ENCODE measurements at regions of chr5 and their contacts with region 1.

Region 1: DNA sequence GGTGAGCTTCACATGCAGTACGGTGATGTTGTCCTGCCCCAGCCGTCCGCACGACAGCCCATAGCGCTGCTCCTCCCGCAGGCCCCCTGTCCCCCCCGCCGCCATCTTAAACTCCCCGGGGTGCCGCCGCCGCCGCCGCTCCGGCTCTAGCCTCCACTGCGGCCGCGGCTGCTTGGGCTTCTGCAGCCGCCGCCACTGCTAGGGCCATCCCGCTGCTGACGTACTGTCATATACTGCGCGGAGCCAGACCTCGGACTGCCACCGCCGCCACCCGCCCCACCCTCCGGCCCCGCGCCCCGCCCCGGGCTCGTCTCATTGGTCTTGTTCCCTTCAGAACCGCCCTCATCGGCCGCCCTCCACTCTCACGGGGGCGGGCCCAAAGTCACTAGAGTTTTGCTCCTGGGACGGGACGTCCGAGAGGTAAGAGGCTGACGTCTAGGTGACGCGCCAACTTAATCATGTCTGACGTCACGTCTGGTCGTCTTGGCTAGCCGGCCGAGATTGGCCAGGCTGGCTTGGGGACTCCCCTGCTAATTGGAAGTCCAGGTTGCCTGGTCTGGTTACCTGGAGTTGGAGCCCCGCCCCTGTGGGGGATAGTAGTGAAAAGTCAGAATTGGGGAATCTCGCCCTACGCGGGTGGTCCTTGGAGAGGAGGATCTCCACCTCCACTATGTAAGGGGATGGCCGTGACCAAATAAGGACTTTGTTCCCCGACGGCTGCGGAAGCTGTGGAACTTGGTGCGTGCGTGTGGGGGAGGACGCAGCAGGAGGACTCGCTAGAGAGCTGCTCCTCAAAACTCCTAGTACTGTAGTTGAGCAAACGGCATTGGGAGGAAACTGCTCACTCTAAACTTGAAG is at the start of gene ELL2:
- DNase-seq: peak; percentile 99
- ATAC-seq: peak; percentile 89
- total RNA-seq, gene ELL2: 30.8 TPM

Region 2: GRCh38 chr5:95858661-95859326 is 103.1 kb before region 1 on chr5:
- intact Hi-C with region 1: loop called (anchors 2 kb)
- DNase-seq: peak; percentile 92
- ATAC-seq: peak; percentile 77

Region 3: DNA sequence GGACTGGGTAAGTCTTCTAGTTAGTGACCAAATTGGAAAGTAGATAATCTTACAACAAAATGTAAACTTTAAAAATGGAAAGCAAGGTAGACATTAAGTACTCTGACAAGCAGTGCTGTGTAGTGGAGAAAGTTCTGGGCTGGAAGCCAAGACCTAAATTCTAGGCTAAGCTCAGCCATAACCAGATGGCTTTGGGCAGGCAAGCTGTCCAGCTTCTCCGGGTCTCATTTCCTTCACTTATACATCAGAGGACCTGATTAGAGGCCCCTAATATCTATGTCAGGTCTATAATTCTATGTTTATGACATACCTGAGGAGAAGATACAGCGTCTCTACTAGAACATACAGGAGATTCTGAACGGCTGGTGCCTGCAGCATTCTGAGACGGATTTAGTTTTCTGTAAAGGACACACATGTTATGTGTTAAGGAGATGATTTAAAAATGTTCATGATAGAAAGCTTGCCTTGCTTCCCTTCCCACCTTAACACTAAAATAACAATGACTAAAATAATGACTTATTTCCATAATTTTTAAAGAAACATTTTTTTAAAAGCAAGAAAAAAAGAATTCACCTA is 61.4 kb before region 1 on chr5:
- intact Hi-C with region 1: loop called (anchors 10 kb)
- DNase-seq: no peak
- ATAC-seq: peak; percentile 89

Region 4: DNA sequence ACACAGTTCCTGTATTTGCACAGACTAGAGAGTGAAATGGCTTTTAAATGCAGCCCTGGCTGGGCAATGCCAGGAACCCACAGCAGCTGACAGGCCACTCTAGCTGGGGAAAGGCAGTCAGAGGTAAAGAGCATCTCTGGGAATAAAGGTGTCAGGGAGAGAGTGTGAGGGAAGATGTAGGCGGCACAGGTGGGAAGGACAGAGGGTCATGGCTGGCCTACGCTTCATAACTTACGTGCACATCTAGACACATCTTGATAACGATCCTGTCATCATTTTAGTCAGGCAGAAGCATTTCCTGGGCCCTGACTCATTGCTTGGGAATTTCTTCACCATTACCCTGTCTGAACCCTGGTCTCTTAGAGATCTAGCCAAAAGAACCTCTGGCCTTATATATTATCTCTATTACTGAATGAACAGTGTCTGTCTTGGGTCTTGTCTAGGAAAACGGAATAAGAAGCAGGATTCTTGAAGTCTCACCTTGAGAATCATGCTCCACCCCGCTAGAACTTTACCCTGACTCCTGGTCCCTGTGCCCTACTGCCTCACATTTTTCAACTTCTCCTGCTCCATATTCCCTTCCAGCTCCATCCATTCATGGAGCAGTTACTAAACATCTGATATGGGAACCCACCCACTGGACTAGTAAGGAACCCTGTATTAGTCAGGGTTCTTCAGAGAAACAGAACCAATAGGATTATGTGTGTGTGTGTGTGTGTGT is 106.2 kb after region 1 on chr5:
- intact Hi-C with region 1: no loop called
- DNase-seq: no peak
- ATAC-seq: no peak

Region 5: DNA sequence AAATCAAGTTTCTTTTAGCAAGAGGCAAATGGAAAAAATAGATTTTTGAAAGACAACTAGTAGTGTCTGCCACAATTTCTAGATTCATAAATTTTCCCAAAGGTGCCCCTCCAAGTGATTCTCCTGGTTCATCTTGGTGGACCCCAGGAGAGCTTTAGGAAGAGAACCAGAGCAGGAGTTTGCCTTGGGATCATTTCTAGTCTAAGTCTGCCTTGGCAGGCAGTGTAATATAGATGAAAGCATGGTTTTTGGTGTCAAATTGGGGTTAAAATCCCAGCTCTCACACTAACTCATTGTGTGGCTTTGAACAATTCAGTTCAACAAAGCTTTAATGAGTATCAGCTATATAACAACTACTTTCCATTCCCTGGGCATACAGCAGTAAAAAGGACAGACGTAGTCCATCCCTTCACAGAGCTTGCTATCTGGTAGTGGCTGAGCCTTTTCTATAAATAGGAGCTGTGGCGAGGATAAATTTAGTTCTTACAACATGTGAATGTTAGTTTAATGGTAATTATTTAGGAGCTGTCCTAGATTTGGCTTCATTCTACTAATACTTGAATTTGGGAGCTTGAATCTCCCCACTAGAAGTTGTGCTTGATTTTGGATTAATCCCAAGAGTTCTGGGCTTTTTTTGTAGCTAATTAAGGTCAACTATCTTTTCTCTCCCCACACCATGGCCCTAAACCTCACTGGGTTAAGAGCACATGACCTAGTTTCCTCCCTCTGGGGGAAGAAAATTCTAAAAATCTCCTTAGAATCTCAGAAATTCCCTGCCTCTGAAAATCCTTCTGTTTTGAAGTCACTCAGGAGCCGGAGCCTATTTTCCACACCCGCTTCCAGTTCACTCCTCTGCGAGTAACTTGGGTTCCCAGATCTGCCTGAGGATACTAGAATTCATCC is 273.4 kb after region 1 on chr5:
- intact Hi-C with region 1: loop called (anchors 10 kb)
- DNase-seq: no peak
- ATAC-seq: peak; percentile 96

Region 6: DNA sequence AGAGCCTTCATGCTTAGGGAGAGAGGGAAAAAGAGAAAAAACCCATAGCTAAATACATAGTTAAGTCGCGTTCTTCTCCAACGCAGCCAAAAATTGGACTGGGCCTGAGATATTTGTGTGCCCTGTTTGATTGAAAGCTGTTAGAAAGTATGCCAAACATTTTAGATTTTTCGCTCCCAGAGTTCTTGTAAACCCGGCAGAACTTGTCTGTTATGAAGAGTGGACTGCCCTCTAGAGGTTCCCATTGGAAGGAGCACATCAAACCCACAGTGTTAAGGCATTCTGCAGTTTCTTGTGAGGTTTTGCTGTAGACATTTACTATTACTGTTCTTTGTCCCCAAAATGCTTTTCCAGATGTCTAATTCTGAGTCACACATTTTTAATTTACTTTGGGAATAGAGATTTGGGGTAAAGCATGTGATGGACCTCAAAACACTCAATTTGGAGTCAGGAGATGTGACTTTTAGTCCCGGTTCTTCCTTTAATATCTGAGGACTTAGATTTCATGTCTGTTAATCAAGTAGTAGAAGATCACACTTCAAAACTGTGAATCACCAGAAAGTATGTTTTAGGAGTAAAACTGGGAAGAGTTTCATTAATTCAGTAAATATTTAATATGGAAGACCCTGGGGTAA is 374.6 kb after region 1 on chr5:
- intact Hi-C with region 1: loop called (anchors 5 kb)
- DNase-seq: no peak
- ATAC-seq: peak; percentile 83

Measured in Right ventricle myocardium superior (tissue), 1 donor.